ENCODE measurements at regions of chr1 and their contacts with region 1.

Region 1: GRCh38 chr1:82632155-82632554 is 831.4 kb downstream of the ADGRL2 start:
- DNase-seq: no peak
- ATAC-seq: no peak
- H3K4me3 ChIP-seq: no peak overlapping the region
- H3K27ac ChIP-seq: no peak overlapping the region
- H3K4me1 ChIP-seq: no peaks in the 10 kb centered on the region
- H3K27me3 ChIP-seq: no peaks in the 10 kb centered on the region

Region 2: GRCh38 chr1:82520611-82521010 is 111.5 kb before region 1 on chr1:
- intact Hi-C with region 1: loop called in 1 of 2 experiments (anchors 10 kb)
- DNase-seq: no peak
- ATAC-seq: no peak
- H3K4me3 ChIP-seq: no peak overlapping the region
- H3K27ac ChIP-seq: no peak overlapping the region
- H3K4me1 ChIP-seq: no peaks in the 10 kb centered on the region
- H3K27me3 ChIP-seq: no peaks in the 10 kb centered on the region

Region 3: GRCh38 chr1:82689217-82689616 is 57.1 kb after region 1 on chr1:
- intact Hi-C with region 1: no loop called
- DNase-seq: no peak
- ATAC-seq: no peak
- H3K4me3 ChIP-seq: no peak overlapping the region
- H3K27ac ChIP-seq: no peak overlapping the region
- H3K4me1 ChIP-seq: no peaks in the 10 kb centered on the region
- H3K27me3 ChIP-seq: no peaks in the 10 kb centered on the region

Region 4: DNA sequence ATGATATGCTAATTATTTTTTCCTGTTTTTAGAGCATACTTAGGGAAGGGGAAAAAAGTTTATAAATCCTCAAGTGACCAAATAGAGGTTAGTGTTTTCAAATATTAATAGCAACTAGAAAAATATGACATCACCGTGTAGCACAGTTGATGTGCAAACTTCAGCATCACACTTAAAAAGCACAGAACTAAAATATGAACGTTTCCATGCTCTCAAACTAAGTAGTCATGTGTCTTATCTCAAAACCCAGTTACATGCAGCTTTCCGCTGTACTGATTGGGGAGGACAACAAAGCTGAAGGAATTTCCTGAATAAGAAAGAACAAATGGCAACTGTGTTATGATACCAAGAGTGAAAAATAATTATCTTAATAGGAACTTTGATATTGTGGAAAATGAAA is 72.2 kb after region 1 on chr1:
- intact Hi-C with region 1: no loop called
- DNase-seq: no peak
- ATAC-seq: peak; percentile 60
- H3K4me3 ChIP-seq: no peak overlapping the region
- H3K27ac ChIP-seq: no peak overlapping the region
- H3K4me1 ChIP-seq: no peaks in the 10 kb centered on the region
- H3K27me3 ChIP-seq: no peaks in the 10 kb centered on the region

Region 5: GRCh38 chr1:83060221-83060620 is 428.1 kb after region 1 on chr1:
- intact Hi-C with region 1: no loop called
- DNase-seq: no peak
- ATAC-seq: no peak
- H3K4me3 ChIP-seq: no peak overlapping the region
- H3K27ac ChIP-seq: no peak overlapping the region
- H3K4me1 ChIP-seq: no peaks in the 10 kb centered on the region
- H3K27me3 ChIP-seq: no peaks in the 10 kb centered on the region

Measured in aorta (tissue), 5 donors.